ENCODE measurements at regions of chr15 and their contacts with region 1.

Region 1: DNA sequence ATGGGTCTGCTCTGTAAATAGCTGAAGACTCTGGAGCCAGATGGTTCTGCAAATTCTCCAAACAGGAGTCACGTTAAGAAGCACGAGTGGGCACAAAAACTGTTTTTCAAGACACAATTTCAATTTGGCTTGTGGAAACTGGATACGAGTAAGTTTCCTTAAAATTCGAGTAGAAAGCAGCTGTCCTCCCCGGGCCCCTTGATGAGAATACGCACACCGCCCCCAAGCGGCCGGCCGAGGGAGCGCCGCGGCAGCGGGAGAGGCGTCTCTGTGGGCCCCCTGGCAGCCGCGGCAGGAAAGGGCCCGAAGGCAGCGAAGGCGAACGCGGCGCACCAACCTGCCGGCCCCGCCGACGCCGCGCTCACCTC is 778 bp upstream of the THBS1 start:
- DNase-seq: peak; percentile 93
- ATAC-seq: peak; percentile 96
- H3K4me3 Mint-ChIP-seq: peak overlapping the region; percentile 66
- H3K27ac Mint-ChIP-seq: no peak overlapping the region
- H3K4me1 Mint-ChIP-seq: peaks cover 36% of the 10 kb centered on the region
- H3K27me3 Mint-ChIP-seq: peaks cover 53% of the 10 kb centered on the region

Region 2: DNA sequence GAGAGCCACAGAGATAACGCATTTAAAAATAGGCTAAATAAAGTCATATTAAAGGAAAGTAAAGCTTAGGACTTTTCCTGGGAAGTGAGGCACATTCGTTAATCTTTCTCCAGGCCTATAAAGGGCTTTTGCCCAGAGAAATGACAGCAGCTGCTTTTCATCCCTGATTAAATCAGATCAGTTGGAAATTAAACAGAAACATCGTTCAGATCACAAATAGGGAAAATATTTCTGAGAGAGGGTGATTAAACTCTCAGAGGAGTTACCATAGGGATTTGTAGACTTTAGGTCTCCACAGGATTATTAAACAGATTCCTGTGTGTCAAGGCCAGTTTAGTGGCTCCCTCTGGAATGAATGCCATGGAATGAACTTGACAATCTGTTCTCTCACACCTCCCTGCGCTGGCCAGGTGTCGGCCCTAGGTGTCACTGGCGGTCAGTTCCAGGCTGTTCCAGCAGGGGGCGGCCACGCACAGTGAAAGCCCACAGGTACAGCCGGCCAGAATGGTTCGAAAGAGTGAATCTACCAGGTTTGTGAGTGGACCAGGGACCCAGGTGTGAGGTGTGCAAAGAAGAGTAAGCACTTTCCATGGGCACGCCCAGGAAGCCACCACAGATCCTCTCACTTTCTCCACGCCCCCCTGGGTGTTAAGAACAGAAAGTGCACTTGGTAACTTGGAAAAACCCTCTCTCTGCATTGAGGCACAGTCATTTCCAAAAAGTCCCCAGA is 762.5 kb before region 1 on chr15:
- CTCF ChIA-PET with region 1: interaction called, 12 read pairs
- POLR2A ChIA-PET with region 1: no interaction called
- DNase-seq: peak; percentile 87
- ATAC-seq: peak; percentile 99
- H3K4me3 Mint-ChIP-seq: no peak overlapping the region
- H3K27ac Mint-ChIP-seq: no peak overlapping the region
- H3K4me1 Mint-ChIP-seq: peaks cover 4% of the 10 kb centered on the region
- H3K27me3 Mint-ChIP-seq: peaks cover 7% of the 10 kb centered on the region

Region 3: GRCh38 chr15:39125904-39126303 is 454.2 kb before region 1 on chr15:
- CTCF ChIA-PET with region 1: interaction called, 16 read pairs
- POLR2A ChIA-PET with region 1: no interaction called
- DNase-seq: peak; percentile 56
- ATAC-seq: peak; percentile 33
- H3K4me3 Mint-ChIP-seq: no peak overlapping the region
- H3K27ac Mint-ChIP-seq: no peak overlapping the region
- H3K4me1 Mint-ChIP-seq: peaks cover 19% of the 10 kb centered on the region
- H3K27me3 Mint-ChIP-seq: peaks cover 17% of the 10 kb centered on the region

Region 4: DNA sequence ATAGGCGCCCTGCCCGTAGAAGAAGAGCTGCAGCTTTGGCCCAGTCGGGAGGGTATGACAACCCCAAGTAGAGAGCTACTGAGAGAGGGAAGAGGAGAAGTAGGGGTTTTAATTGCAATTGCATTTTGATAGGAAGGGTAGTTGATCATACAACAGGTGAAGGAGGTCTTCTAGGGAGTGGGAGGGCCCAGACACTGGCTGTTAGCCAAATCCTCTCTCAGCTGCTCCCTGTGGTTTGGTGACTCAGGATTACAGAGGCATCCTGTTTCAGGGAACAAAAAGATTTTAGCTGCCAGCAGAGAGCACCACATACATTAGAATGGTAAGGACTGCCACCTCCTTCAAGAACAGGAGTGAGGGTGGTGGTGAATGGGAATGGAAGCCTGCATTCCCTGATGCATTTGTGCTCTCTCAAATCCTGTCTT is 408.1 kb before region 1 on chr15:
- CTCF ChIA-PET with region 1: interaction called, 15 read pairs
- POLR2A ChIA-PET with region 1: interaction called, 3 read pairs
- DNase-seq: no peak
- ATAC-seq: no peak
- H3K4me3 Mint-ChIP-seq: no peak overlapping the region
- H3K27ac Mint-ChIP-seq: no peak overlapping the region
- H3K4me1 Mint-ChIP-seq: no peaks in the 10 kb centered on the region
- H3K27me3 Mint-ChIP-seq: peaks cover 20% of the 10 kb centered on the region

Region 5: GRCh38 chr15:39624806-39625205 is 44.7 kb after region 1 on chr15:
- CTCF ChIA-PET with region 1: interaction called, 61 read pairs
- POLR2A ChIA-PET with region 1: no interaction called
- DNase-seq: peak; percentile 83
- ATAC-seq: peak; percentile 79
- H3K4me3 Mint-ChIP-seq: peak overlapping the region; percentile 62
- H3K27ac Mint-ChIP-seq: peak overlapping the region; percentile 97
- H3K4me1 Mint-ChIP-seq: peaks cover 85% of the 10 kb centered on the region
- H3K27me3 Mint-ChIP-seq: no peaks in the 10 kb centered on the region

Region 6: GRCh38 chr15:39833515-39833981 is 253.4 kb after region 1 on chr15:
- CTCF ChIA-PET with region 1: no interaction called
- POLR2A ChIA-PET with region 1: no interaction called
- DNase-seq: no peak
- ATAC-seq: no peak
- H3K4me3 Mint-ChIP-seq: no peak overlapping the region
- H3K27ac Mint-ChIP-seq: no peak overlapping the region
- H3K4me1 Mint-ChIP-seq: no peaks in the 10 kb centered on the region
- H3K27me3 Mint-ChIP-seq: peaks cover 45% of the 10 kb centered on the region